ENCODE measurements at regions of chr12 and their contacts with region 1.

Region 1: GRCh38 chr12:10721651-10722501 is 1.2 kb downstream of the YBX3 start:
- DNase-seq: peak; percentile 93

Region 2: DNA sequence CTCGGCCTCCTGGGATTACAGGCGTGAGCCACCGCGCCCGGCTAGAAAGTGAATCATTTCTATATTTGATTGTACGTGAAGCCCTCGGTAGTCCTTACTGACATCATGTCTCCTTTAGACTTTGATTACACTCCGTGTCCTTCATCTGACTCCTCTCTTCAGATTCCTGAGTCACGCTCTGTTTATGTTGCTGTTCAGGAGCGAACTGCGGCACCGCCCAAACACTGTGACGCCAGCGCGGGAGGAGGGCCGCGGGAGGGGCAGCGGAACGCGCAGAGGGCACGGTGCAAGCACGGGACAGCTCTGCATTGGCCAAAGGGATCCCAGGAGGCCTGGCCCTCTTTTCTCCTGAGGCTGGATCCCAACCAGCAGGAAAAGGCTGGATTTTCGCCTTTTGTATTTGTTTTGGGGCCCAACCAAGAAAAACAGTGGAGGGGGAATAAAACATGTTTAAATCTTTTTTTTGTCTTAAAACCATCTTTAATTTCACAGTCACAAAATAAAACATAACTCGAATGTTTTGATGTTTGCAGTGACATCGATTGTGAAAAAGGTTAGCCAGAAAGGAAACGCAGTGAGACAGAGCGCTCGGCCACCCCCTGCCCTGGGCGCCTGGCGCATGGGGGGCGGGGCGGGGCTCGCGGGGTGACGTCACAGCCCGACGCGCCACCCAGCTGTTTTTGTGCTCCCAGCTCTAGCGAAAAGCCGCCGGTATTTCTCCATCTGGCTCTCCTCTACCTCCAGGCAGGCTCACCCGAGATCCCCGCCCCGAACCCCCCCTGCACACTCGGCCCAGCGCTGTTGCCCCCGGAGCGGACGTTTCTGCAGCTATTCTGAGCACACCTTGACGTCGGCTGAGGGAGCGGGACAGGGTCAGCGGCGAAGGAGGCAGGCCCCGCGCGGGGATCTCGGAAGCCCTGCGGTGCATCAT is 509.4 kb before region 1 on chr12 and contains the start of gene GABARAPL1:
- intact Hi-C with region 1: loop called (anchors 2 kb)
- DNase-seq: peak; percentile 99
- total RNA-seq, gene GABARAPL1: 280 TPM

Region 3: GRCh38 chr12:10364815-10365622 is 356.9 kb before region 1 on chr12:
- intact Hi-C with region 1: loop called (anchors 10 kb)
- DNase-seq: peak; percentile 83

Region 4: GRCh38 chr12:10613349-10614055 is 108.4 kb before region 1 on chr12 and contains the start of gene MAGOHB:
- intact Hi-C with region 1: loop called (anchors 10 kb)
- DNase-seq: peak; percentile 96
- total RNA-seq, gene MAGOHB: 11.7 TPM

Region 5: GRCh38 chr12:10749700-10750384 is 28.0 kb after region 1 on chr12:
- intact Hi-C with region 1: loop called (anchors 1 kb)
- DNase-seq: no peak

Region 6: DNA sequence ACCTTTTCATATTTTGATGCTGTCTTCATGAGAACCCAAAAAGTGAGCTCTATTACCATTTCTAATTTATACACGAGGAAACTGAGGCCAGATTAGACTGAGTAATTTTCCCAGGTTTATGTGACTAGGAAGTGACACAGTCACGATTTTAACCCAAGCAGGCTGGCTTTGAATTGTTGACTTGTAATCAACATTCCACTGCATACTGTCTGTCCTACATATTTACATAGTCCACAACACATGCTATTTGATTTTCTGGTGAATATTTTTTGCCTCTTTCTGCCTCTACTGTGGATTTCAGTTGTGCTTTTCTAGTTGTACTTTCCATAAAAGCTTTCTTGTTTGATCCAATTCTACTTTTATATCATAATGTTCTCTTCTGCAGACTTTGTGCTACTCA is 72.3 kb after region 1 on chr12:
- intact Hi-C with region 1: no loop called
- DNase-seq: no peak

Measured in cardiac septum (tissue), 1 donor.